MCF 10A (cell line): ENCODE measurements at regions of chr2 and their contacts with region 1.

Region 1: GRCh38 chr2:37414470-37414949 is 70.1 kb downstream of the QPCT start:
- DNase-seq: peak; percentile 65
- H3K4me3 Mint-ChIP-seq: no peak overlapping the region
- H3K27ac Mint-ChIP-seq: no peak overlapping the region
- H3K4me1 Mint-ChIP-seq: peaks cover 12% of the 10 kb centered on the region
- H3K27me3 Mint-ChIP-seq: no peaks in the 10 kb centered on the region
- CTCF ChIP-seq: peak; percentile 81

Region 2: GRCh38 chr2:37005118-37005868 is 409.2 kb before region 1 on chr2:
- CTCF ChIA-PET with region 1: no interaction called
- POLR2A ChIA-PET with region 1: no interaction called
- intact Hi-C with region 1: no loop called
- DNase-seq: peak; percentile 36
- H3K4me3 Mint-ChIP-seq: no peak overlapping the region
- H3K27ac Mint-ChIP-seq: no peak overlapping the region
- H3K4me1 Mint-ChIP-seq: no peaks in the 10 kb centered on the region
- H3K27me3 Mint-ChIP-seq: no peaks in the 10 kb centered on the region
- CTCF ChIP-seq: peak; percentile 40

Region 3: GRCh38 chr2:37344453-37345361 is 69.8 kb before region 1 on chr2 and contains the start of gene QPCT:
- CTCF ChIA-PET with region 1: no interaction called
- POLR2A ChIA-PET with region 1: no interaction called
- intact Hi-C with region 1: no loop called
- DNase-seq: no peak
- H3K4me3 Mint-ChIP-seq: no peak within 1 kb of the TSS
- H3K27ac Mint-ChIP-seq: peak within 1 kb of the TSS; percentile 76
- H3K4me1 Mint-ChIP-seq: peaks cover 10% of the 10 kb centered on the region
- H3K27me3 Mint-ChIP-seq: no peaks in the 10 kb centered on the region
- CTCF ChIP-seq: no peak
- total RNA-seq, gene QPCT: not detected in 2 replicates

Region 4: GRCh38 chr2:37398990-37399389 is 15.5 kb before region 1 on chr2:
- CTCF ChIA-PET with region 1: interaction called, 28 read pairs
- POLR2A ChIA-PET with region 1: interaction called, 3 read pairs
- intact Hi-C with region 1: no loop called
- DNase-seq: no peak
- H3K4me3 Mint-ChIP-seq: no peak overlapping the region
- H3K27ac Mint-ChIP-seq: no peak overlapping the region
- H3K4me1 Mint-ChIP-seq: no peaks in the 10 kb centered on the region
- H3K27me3 Mint-ChIP-seq: no peaks in the 10 kb centered on the region
- CTCF ChIP-seq: no peak

Region 5: GRCh38 chr2:37529830-37530415 is 115.4 kb after region 1 on chr2:
- CTCF ChIA-PET with region 1: no interaction called
- POLR2A ChIA-PET with region 1: no interaction called
- intact Hi-C with region 1: loop called (anchors 5 kb)
- DNase-seq: no peak
- H3K4me3 Mint-ChIP-seq: no peak overlapping the region
- H3K27ac Mint-ChIP-seq: no peak overlapping the region
- H3K4me1 Mint-ChIP-seq: peaks cover 9% of the 10 kb centered on the region
- H3K27me3 Mint-ChIP-seq: no peaks in the 10 kb centered on the region
- CTCF ChIP-seq: no peak

Region 6: DNA sequence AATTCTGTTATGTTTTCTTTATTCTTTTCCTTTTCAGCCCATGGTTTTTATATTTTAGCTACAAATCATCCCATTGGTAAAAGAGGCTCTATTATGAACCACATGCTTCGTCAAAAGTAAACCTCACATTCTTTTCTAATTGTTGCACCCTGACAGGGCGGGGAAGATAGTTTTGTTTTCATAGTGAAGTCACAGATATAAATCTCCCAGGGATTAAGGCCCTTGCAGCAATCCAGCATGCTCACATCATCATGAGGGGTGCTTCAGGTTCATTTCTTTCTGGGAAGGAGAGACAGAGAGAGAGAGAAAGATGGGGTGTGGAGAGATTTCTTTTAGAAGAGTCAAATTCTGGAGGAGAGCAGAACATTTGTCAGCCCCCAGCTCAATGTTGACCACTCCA is 381.4 kb after region 1 on chr2:
- CTCF ChIA-PET with region 1: interaction called, 13 read pairs
- POLR2A ChIA-PET with region 1: interaction called, 5 read pairs
- intact Hi-C with region 1: no loop called
- DNase-seq: peak; percentile 62
- H3K4me3 Mint-ChIP-seq: no peak overlapping the region
- H3K27ac Mint-ChIP-seq: peak overlapping the region; percentile 88
- H3K4me1 Mint-ChIP-seq: peaks cover 28% of the 10 kb centered on the region
- H3K27me3 Mint-ChIP-seq: no peaks in the 10 kb centered on the region
- CTCF ChIP-seq: no peak

Region 7: DNA sequence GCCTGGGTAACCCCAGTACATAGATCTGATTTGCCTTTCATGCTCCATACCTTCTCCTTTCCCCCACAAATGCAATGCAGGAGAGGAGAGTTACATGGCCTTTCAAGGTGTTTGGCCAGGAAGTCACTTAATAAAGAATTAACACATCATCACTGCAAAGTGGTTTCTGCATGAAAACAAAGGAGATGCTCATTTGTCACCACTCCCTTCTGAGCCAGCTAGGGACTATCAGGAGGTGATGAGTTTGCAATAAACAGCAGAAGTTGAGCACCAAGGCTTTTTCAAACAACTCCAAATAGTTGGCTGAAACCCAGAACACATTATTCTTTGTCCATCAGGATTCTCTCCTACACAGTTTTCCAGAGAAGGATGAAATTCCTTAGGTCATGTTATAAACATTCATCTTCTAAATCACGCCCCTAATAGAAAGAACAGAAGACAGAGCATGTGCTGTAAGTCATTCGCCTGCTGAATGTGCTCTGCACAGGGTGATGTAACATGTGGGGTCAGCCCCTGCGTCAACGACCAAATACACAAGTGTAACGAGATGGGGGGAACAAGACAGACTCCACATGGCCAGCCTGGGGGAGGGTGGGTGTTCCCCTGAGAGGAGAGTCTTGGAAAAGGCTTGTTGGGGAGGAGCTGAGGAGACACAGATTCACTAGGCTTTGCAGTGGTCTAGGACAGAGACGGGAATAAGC is 423.3 kb after region 1 on chr2:
- CTCF ChIA-PET with region 1: interaction called, 135 read pairs
- POLR2A ChIA-PET with region 1: interaction called, 11 read pairs
- intact Hi-C with region 1: loop called (anchors 1 kb)
- DNase-seq: no peak
- H3K4me3 Mint-ChIP-seq: no peak overlapping the region
- H3K27ac Mint-ChIP-seq: no peak overlapping the region
- H3K4me1 Mint-ChIP-seq: no peaks in the 10 kb centered on the region
- H3K27me3 Mint-ChIP-seq: no peaks in the 10 kb centered on the region
- CTCF ChIP-seq: no peak